ENCODE measurements at regions of chr14 and their contacts with region 1.

Region 1: DNA sequence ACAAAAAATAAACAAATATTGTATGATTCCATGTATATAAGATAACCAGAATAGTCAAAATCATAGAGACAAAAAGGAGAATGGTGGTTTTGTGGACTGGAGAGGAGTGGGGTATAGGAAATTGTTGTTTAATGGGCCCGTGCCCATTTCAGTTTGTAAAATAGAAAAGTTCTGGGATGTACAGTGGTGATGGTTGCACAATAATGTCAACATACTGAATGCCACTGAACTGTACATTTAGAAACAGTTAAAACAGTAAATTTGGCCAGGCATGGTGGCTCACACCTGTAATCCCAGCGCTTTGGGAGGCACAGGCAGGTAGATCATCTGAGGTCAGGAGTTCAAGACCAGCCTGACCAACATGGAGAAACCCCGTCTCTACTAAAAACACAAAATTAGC is 40.1 kb downstream of the NUMB start:
- DNase-seq: no peak
- ATAC-seq: no peak
- H3K4me3 ChIP-seq: no peak overlapping the region
- H3K4me3 Mint-ChIP-seq: no peak overlapping the region
- H3K27ac ChIP-seq: no peak overlapping the region
- H3K27ac Mint-ChIP-seq: no peak overlapping the region
- H3K4me1 ChIP-seq: peaks cover 25 to 39% of the 10 kb centered on the region in 2 donors
- H3K4me1 Mint-ChIP-seq: peaks cover 43% of the 10 kb centered on the region
- H3K27me3 ChIP-seq: no peaks in the 10 kb centered on the region
- H3K27me3 Mint-ChIP-seq: no peaks in the 10 kb centered on the region
- CTCF ChIP-seq: no peak

Region 2: GRCh38 chr14:73397810-73398209 is 20.4 kb before region 1 on chr14:
- CTCF ChIA-PET with region 1: interaction called, 5 read pairs
- POLR2A ChIA-PET with region 1: interaction called, 4 read pairs
- intact Hi-C with region 1: loop called (anchors 1 kb)
- DNase-seq: no peak
- ATAC-seq: no peak
- H3K4me3 ChIP-seq: no peak overlapping the region
- H3K4me3 Mint-ChIP-seq: no peak overlapping the region
- H3K27ac ChIP-seq: no peak overlapping the region
- H3K27ac Mint-ChIP-seq: peak overlapping the region; percentile 0
- H3K4me1 ChIP-seq: peaks cover 29 to 46% of the 10 kb centered on the region in 2 donors
- H3K4me1 Mint-ChIP-seq: peaks cover 51% of the 10 kb centered on the region
- H3K27me3 ChIP-seq: no peaks in the 10 kb centered on the region
- H3K27me3 Mint-ChIP-seq: no peaks in the 10 kb centered on the region
- CTCF ChIP-seq: no peak

Measured in B cell (primary cell).